ENCODE measurements at regions of chr6 and their contacts with region 1.

Region 1: DNA sequence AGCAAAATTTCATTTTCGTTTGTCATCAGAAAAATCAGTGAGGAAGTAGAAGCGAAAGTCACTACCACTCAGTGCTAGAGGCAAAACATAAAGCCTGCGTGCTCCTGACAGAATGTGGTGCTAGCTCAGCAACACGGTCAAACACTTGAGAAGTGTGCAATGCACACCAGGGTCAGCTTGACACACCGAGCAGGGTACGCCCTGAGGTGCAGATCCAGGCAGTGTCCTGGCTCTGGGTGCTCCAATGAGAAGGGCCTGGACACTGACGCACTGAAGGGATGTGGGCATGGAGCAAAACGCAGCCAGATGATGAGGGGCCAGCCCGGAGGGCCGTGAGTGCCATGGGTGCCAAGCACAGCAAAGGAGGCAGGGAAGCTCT is 5.9 kb downstream of the RNASET2 start:
- DNase-seq: peak; percentile 36
- H3K4me3 Mint-ChIP-seq: peak overlapping the region; percentile 73
- H3K27ac Mint-ChIP-seq: peak overlapping the region; percentile 86
- H3K4me1 Mint-ChIP-seq: peaks cover 54% of the 10 kb centered on the region
- H3K27me3 Mint-ChIP-seq: no peaks in the 10 kb centered on the region

Region 2: GRCh38 chr6:166757232-166758135 is 192.9 kb before region 1 on chr6:
- intact Hi-C with region 1: loop called (anchors 5 kb)
- DNase-seq: no peak
- H3K4me3 Mint-ChIP-seq: no peak overlapping the region
- H3K27ac Mint-ChIP-seq: no peak overlapping the region
- H3K4me1 Mint-ChIP-seq: peaks cover 36% of the 10 kb centered on the region
- H3K27me3 Mint-ChIP-seq: peaks cover 55% of the 10 kb centered on the region

Region 3: GRCh38 chr6:166830185-166830890 is 120.1 kb before region 1 on chr6:
- intact Hi-C with region 1: loop called (anchors 1 kb)
- DNase-seq: no peak
- H3K4me3 Mint-ChIP-seq: no peak overlapping the region
- H3K27ac Mint-ChIP-seq: peak overlapping the region; percentile 76
- H3K4me1 Mint-ChIP-seq: peaks cover 20% of the 10 kb centered on the region
- H3K27me3 Mint-ChIP-seq: peaks cover 4% of the 10 kb centered on the region

Region 4: DNA sequence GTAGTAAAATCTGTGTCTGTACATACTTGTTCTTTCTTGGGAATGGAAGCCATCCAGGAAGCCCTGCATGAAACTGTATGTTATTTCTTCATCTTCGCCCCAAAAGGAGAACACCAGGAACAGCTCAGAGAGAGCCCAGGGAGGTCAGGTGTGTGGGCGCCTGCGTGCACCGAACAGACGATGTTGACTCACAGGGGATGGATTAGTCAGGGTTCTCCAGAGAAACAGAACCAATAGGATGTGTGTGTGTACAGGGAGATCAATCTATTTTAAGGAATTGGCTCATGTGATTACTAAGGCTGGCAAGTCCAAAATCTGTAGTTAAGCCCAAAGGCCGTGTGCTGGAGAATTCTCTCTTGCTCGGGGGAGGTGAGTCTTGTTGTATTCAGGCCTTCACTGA is 39.8 kb before region 1 on chr6:
- intact Hi-C with region 1: loop called (anchors 2 kb)
- DNase-seq: no peak
- H3K4me3 Mint-ChIP-seq: no peak overlapping the region
- H3K27ac Mint-ChIP-seq: peak overlapping the region; percentile 20
- H3K4me1 Mint-ChIP-seq: peaks cover 42% of the 10 kb centered on the region
- H3K27me3 Mint-ChIP-seq: no peaks in the 10 kb centered on the region

Region 5: DNA sequence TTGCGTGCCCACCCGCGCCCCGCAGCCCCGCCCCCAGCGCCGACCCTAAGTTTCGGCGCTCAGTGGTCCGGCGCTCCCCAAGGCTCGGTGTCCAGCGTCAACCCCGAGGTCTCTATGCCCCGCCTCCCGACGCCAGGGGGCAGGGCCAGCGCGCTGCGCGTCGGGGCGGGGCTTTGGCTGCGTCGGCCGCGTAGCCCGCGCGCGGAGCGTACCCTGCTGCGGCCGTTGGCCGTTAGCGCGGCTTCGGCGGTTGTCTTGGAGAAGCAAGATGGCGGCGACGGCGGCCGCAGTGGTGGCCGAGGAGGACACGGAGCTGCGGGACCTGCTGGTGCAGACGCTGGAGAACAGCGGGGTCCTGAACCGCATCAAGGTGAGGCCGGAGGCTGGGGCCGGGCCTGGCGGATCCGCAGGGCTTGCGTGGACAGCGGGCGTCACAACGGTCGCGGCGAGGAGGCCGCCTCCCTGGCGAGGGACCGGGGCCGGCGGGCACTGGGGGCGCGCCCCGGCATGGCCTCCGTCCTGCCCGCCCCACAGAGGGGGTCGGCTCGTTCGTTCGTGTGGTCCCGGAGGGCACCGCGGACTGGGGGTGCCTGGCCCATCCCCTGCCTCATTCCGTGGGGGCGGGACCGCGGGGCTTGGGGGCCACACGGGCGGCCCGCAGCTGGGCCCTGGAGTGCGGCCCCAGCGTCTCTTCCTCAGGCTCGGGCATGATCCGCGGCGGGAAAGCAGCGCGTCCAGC is 48.9 kb after region 1 on chr6 and contains the start of gene CEP43:
- intact Hi-C with region 1: loop called (anchors 1 kb)
- DNase-seq: peak; percentile 87
- H3K4me3 Mint-ChIP-seq: peak within 1 kb of the TSS; percentile 87
- H3K27ac Mint-ChIP-seq: peak within 1 kb of the TSS; percentile 80
- H3K4me1 Mint-ChIP-seq: peaks cover 35% of the 10 kb centered on the region
- H3K27me3 Mint-ChIP-seq: no peaks in the 10 kb centered on the region
- total RNA-seq, gene CEP43: 15.9 and 18.1 TPM in 2 replicates

Region 6: DNA sequence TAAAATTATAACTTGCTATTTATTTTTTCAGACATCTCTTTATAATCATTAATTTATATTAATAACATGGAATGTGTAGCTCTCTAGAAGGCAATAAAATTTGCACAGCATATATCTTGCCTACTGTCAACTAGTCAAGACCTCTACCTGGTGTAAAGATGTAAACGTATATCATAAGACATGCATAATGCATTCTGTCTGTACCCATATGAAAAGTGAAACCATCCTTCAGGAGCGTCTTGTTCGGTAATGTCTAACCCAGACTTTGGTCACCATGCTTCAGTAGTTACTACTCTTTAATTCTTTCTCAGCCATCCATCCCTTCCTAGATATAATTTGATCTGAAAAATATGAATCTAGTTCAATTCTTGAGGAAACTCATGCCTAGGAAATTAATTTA is 69.8 kb after region 1 on chr6:
- intact Hi-C with region 1: no loop called
- DNase-seq: no peak
- H3K4me3 Mint-ChIP-seq: no peak overlapping the region
- H3K27ac Mint-ChIP-seq: no peak overlapping the region
- H3K4me1 Mint-ChIP-seq: peaks cover 2% of the 10 kb centered on the region
- H3K27me3 Mint-ChIP-seq: no peaks in the 10 kb centered on the region

Region 7: GRCh38 chr6:167742719-167743303 is 792.4 kb after region 1 on chr6:
- intact Hi-C with region 1: no loop called
- DNase-seq: no peak
- H3K4me3 Mint-ChIP-seq: no peak overlapping the region
- H3K27ac Mint-ChIP-seq: no peak overlapping the region
- H3K4me1 Mint-ChIP-seq: no peaks in the 10 kb centered on the region
- H3K27me3 Mint-ChIP-seq: peaks cover 2% of the 10 kb centered on the region